ENCODE measurements at regions of chr3 and their contacts with region 1.

Region 1: GRCh38 chr3:11379233-11379823 is 107.1 kb downstream of the ATG7 start:
- DNase-seq: peak in 1 of 2 donors; percentile 84
- H3K4me3 ChIP-seq: peak overlapping the region in 1 of 4 donors; percentile 0
- H3K27ac ChIP-seq: peak overlapping the region in 4 of 5 donors; percentile 9 to 66 (median 44)
- H3K4me1 ChIP-seq: peaks cover 10 to 42% (median 18%) of the 10 kb centered on the region in 4 donors
- H3K27me3 ChIP-seq: no peaks in the 10 kb centered on the region
- CTCF ChIP-seq: peak in 5 of 7 experiments; percentile 25 to 68 (median 45)
- EP300 ChIP-seq: no peak
- POLR2A ChIP-seq: no peak

Region 2: GRCh38 chr3:11651900-11652299 is 272.6 kb after region 1 on chr3:
- intact Hi-C with region 1: loop called (anchors 5 kb)
- DNase-seq: peak in 1 of 2 donors; percentile 70
- H3K4me3 ChIP-seq: no peak overlapping the region
- H3K27ac ChIP-seq: no peak overlapping the region
- H3K4me1 ChIP-seq: peaks cover 0 to 35% (median 18%) of the 10 kb centered on the region in 4 donors
- H3K27me3 ChIP-seq: no peaks in the 10 kb centered on the region
- CTCF ChIP-seq: peak in 4 of 7 experiments; percentile 14 to 69 (median 34)
- EP300 ChIP-seq: no peak
- POLR2A ChIP-seq: no peak

Region 3: DNA sequence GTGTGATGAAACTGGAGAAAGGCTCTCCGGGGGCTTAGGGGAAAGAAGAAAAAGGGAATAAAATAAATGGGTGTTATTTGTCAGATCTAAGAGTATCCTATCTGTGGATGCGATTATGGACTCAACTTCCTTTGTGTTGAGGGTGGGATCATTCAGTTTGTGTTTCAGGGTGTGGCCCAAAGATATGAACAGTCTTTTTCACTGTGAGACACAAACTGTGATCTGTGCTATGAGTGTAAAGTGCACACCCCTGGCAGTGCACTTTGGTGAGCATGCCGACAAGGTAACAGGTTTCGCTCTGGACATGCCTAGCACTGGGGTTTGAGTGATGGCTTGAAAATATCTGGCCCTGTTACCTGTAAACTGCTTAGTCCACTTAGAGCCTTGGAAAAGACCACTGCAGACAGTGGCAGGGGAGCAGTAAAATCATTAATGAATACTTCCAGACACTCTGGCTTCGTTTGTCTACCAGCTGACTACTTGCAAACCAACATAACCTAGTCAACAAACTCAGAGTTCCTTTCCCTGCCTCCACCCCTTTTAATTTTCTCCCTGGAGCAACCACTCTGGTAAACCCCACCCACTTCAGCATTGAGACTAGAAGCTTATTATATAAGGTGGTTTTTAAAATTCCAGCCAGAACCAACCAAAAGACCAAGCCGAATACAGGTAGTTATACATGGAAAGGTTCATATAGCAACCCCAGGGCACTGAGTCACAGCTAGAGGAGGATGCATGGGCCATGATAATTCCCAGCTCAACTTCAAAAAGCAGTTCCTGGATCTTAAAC is 412.2 kb after region 1 on chr3:
- intact Hi-C with region 1: loop called (anchors 10 kb)
- DNase-seq: no peak
- H3K4me3 ChIP-seq: no peak overlapping the region
- H3K27ac ChIP-seq: no peak overlapping the region
- H3K4me1 ChIP-seq: no peaks in the 10 kb centered on the region
- H3K27me3 ChIP-seq: no peaks in the 10 kb centered on the region
- CTCF ChIP-seq: no peak
- EP300 ChIP-seq: no peak
- POLR2A ChIP-seq: no peak